ENCODE measurements at regions of chr7 and their contacts with region 1.

Region 1: DNA sequence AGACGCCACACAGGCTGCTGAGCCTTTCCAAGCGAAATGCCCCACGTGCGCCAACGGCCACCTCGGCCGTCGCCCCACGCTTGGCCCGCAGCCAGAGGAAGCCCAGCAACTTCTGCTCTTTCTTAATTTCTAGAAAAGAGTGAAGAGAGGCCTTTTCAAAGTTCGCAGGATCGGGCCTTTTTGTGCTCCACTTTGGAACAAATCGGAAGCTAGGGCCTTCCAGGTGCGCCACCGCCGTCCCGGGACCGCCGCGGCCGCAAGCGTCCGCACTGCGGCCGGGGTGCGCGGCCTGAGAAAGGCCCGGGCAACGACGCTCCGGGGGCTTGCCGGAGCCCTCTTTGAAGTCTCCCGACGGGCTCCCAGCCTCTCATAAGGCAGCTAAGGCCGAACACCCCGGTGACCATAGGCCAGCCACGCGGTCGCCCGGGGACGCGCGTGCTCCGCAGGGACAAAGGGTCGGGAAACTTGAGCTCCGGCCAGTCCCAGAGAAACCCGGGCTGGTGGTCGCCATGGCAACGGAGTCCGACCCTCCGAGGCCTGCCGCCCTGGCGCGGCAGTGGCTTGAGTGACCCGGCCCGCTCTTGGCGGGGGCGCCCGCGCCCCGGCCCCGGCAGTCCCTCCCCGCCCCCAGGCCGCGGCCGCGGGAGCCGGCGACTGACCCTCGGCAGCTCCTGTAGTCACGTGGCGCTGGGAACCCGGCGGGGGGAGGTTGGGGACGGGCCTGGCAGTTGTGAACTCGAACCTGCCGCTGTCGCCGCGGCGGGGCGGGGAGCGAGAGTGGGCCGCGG is at the start of gene REPIN1:
- DNase-seq: peak; percentile 80
- H3K4me3 ChIP-seq: peak within 1 kb of the TSS; percentile 87
- H3K27ac ChIP-seq: peak within 1 kb of the TSS; percentile 39
- H3K4me1 ChIP-seq: peaks cover 68% of the 10 kb centered on the region
- CTCF ChIP-seq: no peak
- total RNA-seq, gene REPIN1: 36.9 and 46.2 TPM in 2 replicates

Region 2: DNA sequence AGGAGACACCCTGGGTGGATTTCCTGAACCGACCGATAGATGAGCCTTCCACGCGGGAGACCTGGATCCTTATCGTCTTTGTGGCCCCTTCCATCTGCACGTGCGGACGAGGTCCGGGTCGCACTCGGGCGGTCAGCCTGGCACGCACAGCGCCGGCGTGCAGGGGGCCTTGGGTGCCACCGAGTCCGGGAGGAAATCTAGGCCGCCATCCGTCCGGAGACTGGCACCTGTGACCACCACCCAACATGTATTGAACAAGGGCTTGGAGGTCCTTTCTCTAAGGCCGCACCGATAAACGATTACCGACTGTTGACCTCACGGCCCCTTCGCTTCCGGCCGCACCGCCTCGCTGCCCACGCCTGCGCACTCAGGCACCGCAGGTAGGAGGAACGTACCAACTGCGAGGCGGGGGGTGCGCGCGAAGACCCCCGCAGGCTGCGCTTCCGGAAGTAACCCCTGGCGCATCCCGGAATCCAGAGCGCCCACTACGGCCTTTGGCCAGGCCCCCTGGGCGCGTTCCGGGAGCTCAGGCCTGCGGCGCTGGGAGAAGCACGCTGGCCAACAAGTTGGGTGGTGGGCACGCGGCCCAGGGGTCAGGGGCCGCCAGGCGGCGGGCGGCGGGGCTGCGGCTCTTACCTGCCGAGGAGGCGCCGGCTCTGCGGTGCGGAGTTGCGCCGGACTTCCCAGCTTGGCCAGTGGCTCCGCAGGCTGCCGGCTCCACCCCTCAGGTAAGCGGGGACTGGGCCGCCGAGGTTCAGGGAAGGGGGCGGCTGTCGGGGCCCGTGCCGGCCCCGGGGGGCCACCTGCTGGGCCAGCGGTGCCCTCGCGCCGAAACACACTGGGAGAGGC is 45.2 kb before region 1 on chr7 and contains the starts of genes ACTR3C and LRRC61:
- CTCF ChIA-PET with region 1: no interaction called
- POLR2A ChIA-PET with region 1: no interaction called
- intact Hi-C with region 1: no loop called
- DNase-seq: no peak
- H3K4me3 ChIP-seq: no peak within 1 kb of the TSS
- H3K27ac ChIP-seq: no peak within 1 kb of the TSS
- H3K4me1 ChIP-seq: no peaks in the 10 kb centered on the region
- CTCF ChIP-seq: no peak
- total RNA-seq, gene ACTR3C: 5.4 TPM in 1 of 2 replicates, not detected in the other
- total RNA-seq, gene LRRC61: not detected in 2 replicates

Region 3: DNA sequence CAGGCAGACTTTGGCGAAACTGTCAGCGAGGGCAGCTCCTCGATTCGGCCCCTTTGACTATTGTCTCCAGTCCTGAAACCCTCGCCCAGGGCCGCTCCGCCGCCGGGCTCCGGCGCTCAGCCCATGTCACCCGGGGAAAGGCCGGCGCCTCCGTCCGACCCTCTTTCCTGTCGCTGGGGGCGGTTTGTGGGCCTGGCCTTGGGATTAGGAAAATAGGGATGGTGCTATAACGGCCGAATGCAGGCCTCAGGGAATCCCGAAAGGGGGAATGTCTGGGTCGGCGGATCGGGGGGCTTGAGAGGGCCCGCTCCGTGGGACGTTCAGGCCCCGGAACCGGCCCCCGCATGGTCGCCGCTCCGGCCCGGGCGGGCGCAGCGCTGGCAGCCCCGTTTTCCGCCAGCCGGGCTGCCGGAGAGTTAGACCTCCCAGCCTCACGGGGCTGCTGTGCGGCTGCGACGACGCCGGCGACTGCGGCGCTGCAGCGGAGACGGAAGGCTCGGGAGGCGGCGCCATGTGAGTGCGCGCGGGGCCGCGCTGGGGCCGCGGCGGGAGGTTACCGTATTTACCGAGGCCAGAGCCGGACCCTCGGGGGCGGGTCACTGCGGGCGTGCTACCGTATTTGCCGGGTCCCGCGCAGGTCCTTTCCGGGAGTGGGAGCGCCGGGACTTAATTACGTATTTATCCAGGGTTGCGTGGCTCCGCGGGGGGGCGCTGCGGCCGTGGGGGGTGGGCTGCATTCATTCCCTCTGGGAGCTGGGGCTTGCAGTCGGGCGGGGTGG is 36.7 kb after region 1 on chr7:
- CTCF ChIA-PET with region 1: no interaction called
- POLR2A ChIA-PET with region 1: interaction called, 20 read pairs
- intact Hi-C with region 1: loop called (anchors 2 kb)
- DNase-seq: peak; percentile 90
- H3K4me3 ChIP-seq: peak overlapping the region; percentile 80
- H3K27ac ChIP-seq: peak overlapping the region; percentile 89
- H3K4me1 ChIP-seq: peaks cover 40% of the 10 kb centered on the region
- CTCF ChIP-seq: peak; percentile 62

Region 4: DNA sequence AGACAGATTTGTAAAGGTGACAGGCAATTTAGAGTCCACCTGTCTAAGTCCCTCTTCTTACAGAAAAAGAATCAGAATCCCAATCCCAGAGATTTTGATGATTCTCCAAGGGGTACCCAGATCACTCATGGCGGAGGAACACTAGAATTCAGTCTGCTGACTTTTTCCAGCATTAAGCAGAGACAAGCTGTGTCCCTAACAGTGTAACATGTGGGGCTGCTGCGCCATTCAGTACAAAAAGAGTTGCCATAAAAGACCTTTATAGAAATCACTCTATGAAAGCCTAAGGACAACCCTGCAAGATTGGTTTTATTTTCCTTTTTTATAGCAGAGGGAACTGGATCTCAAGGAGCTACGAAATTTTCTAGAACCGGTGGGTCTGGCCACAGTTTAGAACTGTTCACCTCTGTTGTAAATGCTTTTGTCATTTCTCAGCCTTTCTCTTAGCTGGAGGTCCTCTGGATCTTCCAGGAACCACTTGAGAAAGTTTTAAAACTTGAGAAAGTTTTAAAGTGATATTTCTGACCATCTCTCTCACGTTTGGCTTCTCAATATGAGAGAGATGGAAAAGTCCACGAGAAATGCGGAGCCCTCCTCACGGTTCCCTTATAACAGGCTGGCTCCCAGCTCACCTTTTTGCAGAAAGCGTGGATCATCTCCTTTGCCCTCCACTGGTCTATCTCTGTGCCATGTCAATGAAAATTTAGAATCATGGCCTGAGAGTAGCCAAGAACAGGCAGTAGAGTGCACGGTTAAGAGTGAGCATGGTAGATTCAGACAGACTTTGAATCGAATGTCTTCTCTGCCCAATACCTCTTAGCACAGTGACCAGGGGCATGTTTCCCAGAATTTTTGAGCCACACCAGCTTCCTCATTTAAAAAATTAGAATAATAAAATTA is 147.2 kb after region 1 on chr7:
- CTCF ChIA-PET with region 1: no interaction called
- POLR2A ChIA-PET with region 1: no interaction called
- intact Hi-C with region 1: no loop called
- DNase-seq: no peak
- H3K4me3 ChIP-seq: no peak overlapping the region
- H3K27ac ChIP-seq: no peak overlapping the region
- H3K4me1 ChIP-seq: no peaks in the 10 kb centered on the region
- CTCF ChIP-seq: no peak